ENCODE measurements at regions of chr5 and their contacts with region 1.

Region 1: GRCh38 chr5:140073296-140073695 is 30.2 kb upstream of the NRG2 start:
- DNase-seq: no peak
- H3K4me3 ChIP-seq: no peak overlapping the region
- CTCF ChIP-seq: no peak

Region 2: GRCh38 chr5:140060816-140061215 is 12.5 kb before region 1 on chr5:
- CTCF ChIA-PET with region 1: interaction called, 10 read pairs
- POLR2A ChIA-PET with region 1: no interaction called
- DNase-seq: no peak
- H3K4me3 ChIP-seq: no peak overlapping the region
- CTCF ChIP-seq: no peak

Region 3: GRCh38 chr5:140107312-140108083 is 34.2 kb after region 1 on chr5:
- CTCF ChIA-PET with region 1: interaction called, 20 read pairs
- POLR2A ChIA-PET with region 1: no interaction called
- DNase-seq: peak; percentile 51
- H3K4me3 ChIP-seq: peak overlapping the region; percentile 85
- CTCF ChIP-seq: peak; percentile 44

Region 4: GRCh38 chr5:140131967-140132409 is 58.7 kb after region 1 on chr5:
- CTCF ChIA-PET with region 1: interaction called, 58 read pairs
- POLR2A ChIA-PET with region 1: no interaction called
- DNase-seq: peak; percentile 80
- H3K4me3 ChIP-seq: no peak overlapping the region
- CTCF ChIP-seq: no peak

Region 5: GRCh38 chr5:140169410-140169809 is 96.1 kb after region 1 on chr5:
- CTCF ChIA-PET with region 1: interaction called, 15 read pairs
- POLR2A ChIA-PET with region 1: no interaction called
- DNase-seq: no peak
- H3K4me3 ChIP-seq: no peak overlapping the region
- CTCF ChIP-seq: no peak

Measured in AG04449 (cell line).